Heart left ventricle (tissue), 16 donors: ENCODE measurements at regions of chr1 and their contacts with region 1.

Region 1: DNA sequence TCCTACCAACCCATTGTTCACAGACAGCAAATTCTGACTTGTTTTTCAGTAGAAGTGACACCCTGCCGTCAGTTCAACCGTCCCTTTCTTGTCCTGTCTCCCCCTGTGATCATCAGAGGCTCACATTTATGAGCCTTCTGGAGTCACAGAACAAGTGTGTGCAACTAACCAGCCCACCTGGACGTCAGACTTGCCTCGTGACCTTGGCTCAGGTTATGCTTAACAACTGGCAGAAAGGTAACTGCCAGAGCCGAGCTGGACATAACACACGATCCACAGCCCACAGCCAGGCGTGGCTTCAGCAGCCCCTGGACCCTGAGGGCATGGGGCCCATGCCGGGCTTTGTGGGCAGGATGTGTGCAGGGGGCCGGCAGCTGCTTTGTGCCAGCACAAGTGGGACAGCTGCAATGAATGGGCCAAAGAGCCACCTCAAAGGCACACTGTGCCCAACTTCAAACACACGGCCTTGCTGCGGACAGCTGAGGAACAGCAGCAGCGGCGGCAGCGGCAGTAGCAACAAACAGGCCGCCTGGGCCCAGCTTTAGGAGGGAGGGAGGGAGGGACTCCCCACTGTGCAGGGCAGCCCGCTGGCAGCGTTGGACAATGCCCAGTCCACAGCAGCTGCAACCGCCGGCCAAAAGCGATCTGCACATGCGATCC is 103.9 kb downstream of the ZBTB18 start:
- DNase-seq: no peak
- ATAC-seq: peak in 1 of 4 donors; percentile 13
- H3K4me3 ChIP-seq: no peak overlapping the region
- H3K27ac ChIP-seq: no peak overlapping the region
- H3K4me1 ChIP-seq: peaks cover 0 to 5% (median 0%) of the 10 kb centered on the region in 12 donors
- H3K27me3 ChIP-seq: no peaks in the 10 kb centered on the region
- CTCF ChIP-seq: no peak
- POLR2A ChIP-seq: no peak

Region 2: DNA sequence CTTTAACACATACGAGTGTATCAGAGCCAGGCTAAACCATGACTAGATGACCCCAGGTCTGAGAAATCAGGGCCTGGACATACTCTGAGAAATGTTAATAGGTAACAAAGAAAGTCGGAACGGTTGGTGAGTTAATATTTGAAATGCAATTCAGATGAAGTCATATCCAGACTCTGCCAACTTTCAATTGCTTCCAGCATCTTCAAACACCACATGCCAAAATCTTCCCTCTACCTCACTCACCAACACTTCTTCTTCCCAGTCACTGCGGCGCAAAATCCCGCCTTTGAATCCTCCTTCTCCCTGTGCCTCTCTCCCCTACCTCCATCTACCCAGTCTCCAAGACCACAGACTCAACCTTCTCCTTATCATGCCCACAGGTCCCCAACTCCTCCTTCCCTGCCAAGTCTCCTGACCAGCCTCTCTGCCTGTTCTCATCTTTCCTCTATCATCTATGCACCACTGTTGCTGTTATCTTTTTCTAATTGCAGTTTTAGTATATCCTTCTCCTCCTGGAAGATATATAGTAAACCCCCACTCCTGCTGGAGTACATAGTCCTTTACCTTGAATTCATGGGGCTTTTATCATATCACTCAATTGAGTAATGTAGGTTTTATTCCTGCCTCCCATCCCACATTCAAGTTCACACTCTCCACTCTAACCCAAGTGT is 62.6 kb before region 1 on chr1:
- intact Hi-C with region 1: no loop called
- DNase-seq: peak in 1 of 5 donors; percentile 3
- ATAC-seq: no peak
- H3K4me3 ChIP-seq: no peak overlapping the region
- H3K27ac ChIP-seq: no peak overlapping the region
- H3K4me1 ChIP-seq: no peaks in the 10 kb centered on the region
- H3K27me3 ChIP-seq: peaks cover 0 to 5% (median 0%) of the 10 kb centered on the region in 9 donors
- CTCF ChIP-seq: no peak
- POLR2A ChIP-seq: no peak

Region 3: GRCh38 chr1:244207042-244207934 is 52.3 kb after region 1 on chr1:
- intact Hi-C with region 1: loop called in 1 of 10 experiments (anchors 5 kb)
- DNase-seq: peak in 2 of 5 donors; percentile 39 to 42
- ATAC-seq: peak in 3 of 4 donors; percentile 59 to 86 (median 69)
- H3K4me3 ChIP-seq: no peak overlapping the region
- H3K27ac ChIP-seq: peak overlapping the region in 9 of 12 donors; percentile 12 to 69 (median 57)
- H3K4me1 ChIP-seq: peaks cover 0 to 20% (median 10%) of the 10 kb centered on the region in 12 donors
- H3K27me3 ChIP-seq: no peaks in the 10 kb centered on the region
- CTCF ChIP-seq: no peak
- POLR2A ChIP-seq: no peak